ENCODE measurements at regions of chr3 and their contacts with region 1.

Region 1: DNA sequence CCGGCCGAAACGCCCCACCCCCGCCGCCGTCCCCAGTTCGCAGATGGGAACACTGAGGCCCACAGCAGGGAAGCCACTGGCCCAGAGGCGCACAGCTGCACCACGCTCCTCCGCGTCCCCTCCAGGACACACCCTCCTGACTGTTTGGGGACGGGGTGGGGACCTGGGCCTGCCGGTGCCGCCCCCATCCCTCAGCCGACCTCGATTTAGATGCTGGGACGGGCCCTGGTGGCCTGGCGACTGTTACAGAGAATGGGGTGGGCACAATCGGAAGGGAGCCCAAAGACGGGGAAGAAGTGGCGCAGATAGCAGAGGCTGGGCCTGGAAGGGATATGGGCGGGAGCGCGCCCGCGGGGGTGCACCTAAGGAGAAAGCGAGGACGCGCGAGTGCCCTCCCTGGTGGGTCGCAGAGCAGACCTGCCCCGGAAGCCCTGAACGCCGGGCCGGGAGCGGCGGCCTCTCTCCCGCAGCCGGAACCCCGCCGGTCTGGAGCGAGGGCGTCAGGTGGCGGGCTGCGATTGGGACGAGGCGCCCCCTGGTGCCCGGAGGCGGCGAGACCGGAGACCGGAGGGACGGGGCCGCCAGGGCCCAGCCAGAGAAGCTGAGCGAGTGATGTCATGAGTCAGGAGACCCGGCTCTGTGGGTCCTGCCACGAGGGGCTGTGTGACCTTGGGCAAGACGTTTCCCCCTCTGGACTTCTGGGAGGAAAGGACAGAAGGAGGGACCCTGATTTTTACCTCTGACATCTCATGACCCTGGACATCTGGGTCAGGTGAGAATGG is 78.4 kb downstream of the IQSEC1 start:
- DNase-seq: peak; percentile 30
- H3K4me3 ChIP-seq: peak overlapping the region; percentile 71
- H3K27ac ChIP-seq: peak overlapping the region; percentile 21
- H3K27me3 ChIP-seq: peaks cover 10% of the 10 kb centered on the region
- CTCF ChIP-seq: peak; percentile 83

Region 2: DNA sequence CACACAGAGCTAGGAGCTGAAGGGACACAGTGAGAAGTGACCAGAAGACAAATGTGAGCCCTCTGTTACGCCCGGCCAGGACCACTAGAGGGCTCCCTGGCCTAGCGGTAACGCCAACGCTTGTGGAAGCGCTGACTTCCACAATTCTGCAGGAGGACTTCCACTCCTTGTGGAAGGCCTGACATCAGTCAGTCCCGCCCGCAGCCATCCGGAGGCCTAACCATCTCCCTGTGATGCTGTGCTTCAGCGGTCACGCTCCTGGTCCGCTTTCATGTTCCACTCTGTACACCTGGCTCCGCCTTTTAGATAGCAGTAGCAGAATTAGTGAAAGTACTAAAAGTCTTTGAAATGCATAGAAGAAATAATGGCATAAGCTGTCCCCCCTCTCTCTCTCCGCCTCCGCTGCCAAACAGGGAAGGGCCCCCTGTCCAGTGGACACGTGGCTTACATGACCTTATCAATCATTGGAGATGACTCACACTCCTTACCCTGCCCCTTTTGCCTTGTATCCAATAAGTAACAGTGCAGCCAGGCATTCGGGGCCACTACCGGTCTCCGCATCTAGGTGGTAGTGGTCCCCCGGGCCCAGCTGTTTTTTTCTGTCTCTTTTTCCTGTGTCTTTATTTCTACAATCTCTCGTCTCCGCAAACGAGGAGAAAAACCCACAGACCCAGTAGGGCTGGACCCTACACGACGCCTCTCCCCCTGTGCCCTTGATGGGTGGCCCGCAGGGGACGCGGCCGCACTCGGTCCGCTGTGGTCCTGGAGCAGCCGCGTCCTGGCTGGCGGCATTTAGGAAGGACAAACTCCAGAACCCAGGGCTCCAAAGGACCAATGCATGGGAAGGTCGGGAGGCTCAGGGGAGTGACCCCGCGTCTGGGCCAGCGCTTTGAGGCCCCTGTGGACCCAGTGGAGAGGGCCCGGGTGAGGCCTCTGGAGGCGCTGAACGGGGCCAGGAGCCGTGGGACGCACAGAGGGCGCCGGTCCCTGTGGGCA is 126.5 kb before region 1 on chr3:
- CTCF ChIA-PET with region 1: interaction called, 12 read pairs
- POLR2A ChIA-PET with region 1: no interaction called
- DNase-seq: peak; percentile 61
- H3K4me3 ChIP-seq: 0 out of 2 replicates have a peak overlapping the region, but pooled peaks have one; percentile 13
- H3K27ac ChIP-seq: no peak overlapping the region
- H3K27me3 ChIP-seq: peaks cover 42% of the 10 kb centered on the region
- CTCF ChIP-seq: peak; percentile 95

Region 3: GRCh38 chr3:12930964-12931905 is 63.6 kb before region 1 on chr3:
- CTCF ChIA-PET with region 1: no interaction called
- POLR2A ChIA-PET with region 1: no interaction called
- DNase-seq: no peak
- H3K4me3 ChIP-seq: no peak overlapping the region
- H3K27ac ChIP-seq: no peak overlapping the region
- H3K27me3 ChIP-seq: no peaks in the 10 kb centered on the region
- CTCF ChIP-seq: no peak

Region 4: GRCh38 chr3:12967606-12968351 is 27.0 kb before region 1 on chr3:
- CTCF ChIA-PET with region 1: interaction called, 11 read pairs
- POLR2A ChIA-PET with region 1: no interaction called
- DNase-seq: peak; percentile 73
- H3K4me3 ChIP-seq: peak overlapping the region; percentile 81
- H3K27ac ChIP-seq: peak overlapping the region; percentile 11
- H3K27me3 ChIP-seq: peaks cover 17% of the 10 kb centered on the region
- CTCF ChIP-seq: no peak

Region 5: DNA sequence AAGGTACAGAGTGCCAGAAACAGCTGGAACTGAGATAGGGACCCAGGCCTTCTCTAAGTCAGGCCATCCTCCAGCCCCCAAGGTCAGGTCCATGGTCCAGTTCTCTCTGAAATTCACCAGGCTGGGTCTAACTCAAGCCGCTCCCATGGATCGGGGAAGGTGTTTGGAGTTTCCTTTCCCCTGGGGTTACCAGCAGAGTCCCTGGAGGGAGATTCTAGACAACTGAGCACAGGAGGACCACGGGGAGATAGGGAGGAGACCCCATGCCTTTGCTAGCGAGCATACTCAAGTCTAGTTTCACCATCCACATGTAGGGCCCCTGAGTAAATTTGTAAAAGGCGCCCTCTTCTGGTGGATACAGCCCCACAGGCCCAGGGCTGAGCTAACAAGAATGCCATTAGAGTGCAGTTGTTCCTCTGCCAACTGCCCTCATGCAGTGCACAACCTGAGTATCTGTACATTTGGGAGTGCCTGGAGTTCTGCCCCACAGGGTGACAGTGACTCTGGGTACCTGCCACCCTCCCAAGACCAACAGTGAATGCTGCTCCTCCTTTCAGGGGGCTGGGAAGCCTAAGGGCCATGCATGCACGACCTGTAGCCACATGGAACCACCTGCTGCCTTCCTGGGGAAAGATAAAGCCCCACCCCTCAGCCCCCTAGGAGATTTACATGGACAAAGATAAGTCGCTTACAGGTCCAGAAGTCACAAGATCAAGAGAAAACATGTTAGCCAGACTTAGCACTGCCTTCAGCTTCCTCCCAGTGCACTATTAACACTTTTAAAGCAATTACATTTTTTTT is 10.6 kb before region 1 on chr3:
- CTCF ChIA-PET with region 1: interaction called, 24 read pairs
- POLR2A ChIA-PET with region 1: interaction called, 6 read pairs
- DNase-seq: no peak
- H3K4me3 ChIP-seq: no peak overlapping the region
- H3K27ac ChIP-seq: no peak overlapping the region
- H3K27me3 ChIP-seq: peaks cover 7% of the 10 kb centered on the region
- CTCF ChIP-seq: peak; percentile 77

Region 6: DNA sequence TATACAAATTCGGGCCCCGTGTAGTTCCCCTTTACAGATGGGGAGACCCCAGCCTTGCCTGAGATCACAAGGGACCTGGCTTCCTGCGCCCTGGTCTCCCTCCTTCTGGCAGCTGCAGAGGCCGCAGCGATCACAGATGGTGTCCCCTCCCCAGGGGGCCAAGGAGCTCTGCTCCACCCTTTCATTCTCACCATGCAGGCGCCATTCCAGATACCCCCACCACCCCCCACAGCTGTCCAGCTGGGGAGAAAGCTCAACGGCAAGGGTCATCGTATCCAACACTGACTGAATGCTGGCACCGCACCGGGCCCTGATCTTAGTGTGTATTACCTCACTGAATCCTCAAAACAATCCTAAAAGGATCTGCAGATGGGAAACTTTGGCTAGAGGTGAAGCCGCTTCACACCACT is 26.3 kb after region 1 on chr3:
- CTCF ChIA-PET with region 1: interaction called, 5 read pairs
- POLR2A ChIA-PET with region 1: interaction called, 10 read pairs
- DNase-seq: no peak
- H3K4me3 ChIP-seq: peak overlapping the region; percentile 49
- H3K27ac ChIP-seq: peak overlapping the region; percentile 11
- H3K27me3 ChIP-seq: no peaks in the 10 kb centered on the region
- CTCF ChIP-seq: no peak

Region 7: DNA sequence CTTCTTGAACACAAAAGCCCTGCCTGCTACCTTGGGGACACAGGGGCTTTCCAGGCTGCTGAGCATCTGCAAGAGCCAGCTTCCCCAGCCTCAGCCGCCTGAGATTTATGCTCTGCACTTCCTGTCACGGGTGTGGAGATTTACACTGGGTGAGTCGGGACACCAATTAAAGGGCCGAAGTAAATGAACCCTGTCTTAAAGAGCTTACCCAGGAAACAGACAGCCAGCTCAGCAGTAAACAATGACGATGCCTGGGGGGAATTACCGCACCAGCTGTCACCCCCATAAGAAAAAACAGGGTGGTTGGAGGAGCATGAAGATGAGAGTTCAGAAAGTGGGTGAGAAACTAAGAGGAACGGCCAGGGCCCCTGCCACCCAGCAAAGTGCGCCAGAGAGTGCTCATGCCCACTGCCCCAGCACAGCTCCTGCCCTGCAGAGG is 115.9 kb after region 1 on chr3:
- CTCF ChIA-PET with region 1: no interaction called
- POLR2A ChIA-PET with region 1: no interaction called
- DNase-seq: no peak
- H3K4me3 ChIP-seq: no peak overlapping the region
- H3K27ac ChIP-seq: no peak overlapping the region
- H3K27me3 ChIP-seq: peaks cover 13% of the 10 kb centered on the region
- CTCF ChIP-seq: no peak

Measured in AG04450 (cell line).